ENCODE measurements at regions of chr2 and their contacts with region 1.

Region 1: GRCh38 chr2:196076778-196077568 is 8.3 kb upstream of the DNAH7 start:
- DNase-seq: no peak
- H3K4me3 ChIP-seq: no peak overlapping the region
- H3K4me3 Mint-ChIP-seq: no peak overlapping the region
- H3K27ac Mint-ChIP-seq: no peak overlapping the region
- H3K4me1 ChIP-seq: peaks cover 8% of the 10 kb centered on the region
- H3K4me1 Mint-ChIP-seq: peaks cover 7% of the 10 kb centered on the region
- H3K27me3 ChIP-seq: no peaks in the 10 kb centered on the region
- H3K27me3 Mint-ChIP-seq: no peaks in the 10 kb centered on the region
- CTCF ChIP-seq: no peak

Region 2: GRCh38 chr2:196131384-196131937 is 54.5 kb after region 1 on chr2:
- CTCF ChIA-PET with region 1: no interaction called
- POLR2A ChIA-PET with region 1: no interaction called
- intact Hi-C with region 1: loop called (anchors 2 kb)
- DNase-seq: peak; percentile 58 to 72
- H3K4me3 ChIP-seq: no peak overlapping the region
- H3K4me3 Mint-ChIP-seq: no peak overlapping the region
- H3K27ac Mint-ChIP-seq: peak overlapping the region; percentile 66
- H3K4me1 ChIP-seq: no peaks in the 10 kb centered on the region
- H3K4me1 Mint-ChIP-seq: no peaks in the 10 kb centered on the region
- H3K27me3 ChIP-seq: no peaks in the 10 kb centered on the region
- H3K27me3 Mint-ChIP-seq: no peaks in the 10 kb centered on the region
- CTCF ChIP-seq: peak in 1 of 2 experiments; percentile 68

Region 3: GRCh38 chr2:196337208-196337953 is 260.4 kb after region 1 on chr2:
- CTCF ChIA-PET with region 1: interaction called, 16 read pairs
- POLR2A ChIA-PET with region 1: no interaction called
- intact Hi-C with region 1: loop called (anchors 1 kb)
- DNase-seq: peak in 1 of 2 experiments; percentile 34
- H3K4me3 ChIP-seq: no peak overlapping the region
- H3K4me3 Mint-ChIP-seq: no peak overlapping the region
- H3K27ac Mint-ChIP-seq: no peak overlapping the region
- H3K4me1 ChIP-seq: peaks cover 7% of the 10 kb centered on the region; the same call in 1 of the 2 replicates
- H3K4me1 Mint-ChIP-seq: peaks cover 7% of the 10 kb centered on the region
- H3K27me3 ChIP-seq: no peaks in the 10 kb centered on the region
- H3K27me3 Mint-ChIP-seq: no peaks in the 10 kb centered on the region
- CTCF ChIP-seq: peak; percentile 25 to 72

Region 4: GRCh38 chr2:196767101-196767500 is 690.1 kb after region 1 on chr2:
- CTCF ChIA-PET with region 1: no interaction called
- POLR2A ChIA-PET with region 1: no interaction called
- intact Hi-C with region 1: loop called (anchors 10 kb)
- DNase-seq: no peak
- H3K4me3 ChIP-seq: no peak overlapping the region
- H3K4me3 Mint-ChIP-seq: no peak overlapping the region
- H3K27ac Mint-ChIP-seq: no peak overlapping the region
- H3K4me1 ChIP-seq: no peaks in the 10 kb centered on the region
- H3K4me1 Mint-ChIP-seq: no peaks in the 10 kb centered on the region
- H3K27me3 ChIP-seq: no peaks in the 10 kb centered on the region
- H3K27me3 Mint-ChIP-seq: no peaks in the 10 kb centered on the region
- CTCF ChIP-seq: no peak

Measured in Caco-2 (cell line).